ENCODE measurements at regions of chr20 and their contacts with region 1.

Region 1: GRCh38 chr20:34704177-34705007 is at the start of gene TP53INP2:
- DNase-seq: peak; percentile 94 to 96
- ATAC-seq: peak; percentile 79 to 88 (median 86)
- H3K4me3 ChIP-seq: peak within 1 kb of the TSS; percentile 58 to 91 (median 79)
- H3K27ac ChIP-seq: peak within 1 kb of the TSS; percentile 98 to 100 (median 100)
- H3K4me1 ChIP-seq: peaks cover 5 to 53% (median 43%) of the 10 kb centered on the region in 9 donors
- H3K27me3 ChIP-seq: no peaks in the 10 kb centered on the region
- CTCF ChIP-seq: no peak
- total RNA-seq, gene TP53INP2: 73.4 to 174 (median 136) TPM

Region 2: GRCh38 chr20:34538671-34539123 is 165.7 kb before region 1 on chr20:
- intact Hi-C with region 1: loop called in 9 of 10 experiments (anchors 5 to 10 kb)
- DNase-seq: peak in 1 of 2 donors; percentile 49
- ATAC-seq: peak in 7 of 8 donors; percentile 14 to 68 (median 51)
- H3K4me3 ChIP-seq: no peak overlapping the region
- H3K27ac ChIP-seq: peak overlapping the region in 1 of 10 donors; percentile 10
- H3K4me1 ChIP-seq: peaks cover 0 to 26% (median 10%) of the 10 kb centered on the region in 9 donors
- H3K27me3 ChIP-seq: no peaks in the 10 kb centered on the region
- CTCF ChIP-seq: peak; percentile 47 to 84 (median 79)

Region 3: GRCh38 chr20:34558320-34559218 is 145.8 kb before region 1 on chr20 and contains the start of gene MAP1LC3A:
- intact Hi-C with region 1: loop called in 1 of 10 experiments (anchors 5 kb)
- DNase-seq: peak; percentile 95 to 97
- ATAC-seq: peak; percentile 91 to 97 (median 96)
- H3K4me3 ChIP-seq: peak within 1 kb of the TSS; percentile 63 to 93 (median 74)
- H3K27ac ChIP-seq: peak within 1 kb of the TSS; percentile 71 to 98 (median 94)
- H3K4me1 ChIP-seq: peaks cover 0 to 32% (median 15%) of the 10 kb centered on the region in 9 donors
- H3K27me3 ChIP-seq: no peaks in the 10 kb centered on the region
- CTCF ChIP-seq: no peak
- total RNA-seq, gene MAP1LC3A: 61.7 to 137 (median 74.6) TPM

Region 4: GRCh38 chr20:34615477-34615876 is 88.9 kb before region 1 on chr20:
- intact Hi-C with region 1: no loop called
- DNase-seq: no peak
- ATAC-seq: no peak
- H3K4me3 ChIP-seq: no peak overlapping the region
- H3K27ac ChIP-seq: no peak overlapping the region
- H3K4me1 ChIP-seq: peaks cover 0 to 5% (median 0%) of the 10 kb centered on the region in 9 donors
- H3K27me3 ChIP-seq: no peaks in the 10 kb centered on the region
- CTCF ChIP-seq: no peak

Region 5: DNA sequence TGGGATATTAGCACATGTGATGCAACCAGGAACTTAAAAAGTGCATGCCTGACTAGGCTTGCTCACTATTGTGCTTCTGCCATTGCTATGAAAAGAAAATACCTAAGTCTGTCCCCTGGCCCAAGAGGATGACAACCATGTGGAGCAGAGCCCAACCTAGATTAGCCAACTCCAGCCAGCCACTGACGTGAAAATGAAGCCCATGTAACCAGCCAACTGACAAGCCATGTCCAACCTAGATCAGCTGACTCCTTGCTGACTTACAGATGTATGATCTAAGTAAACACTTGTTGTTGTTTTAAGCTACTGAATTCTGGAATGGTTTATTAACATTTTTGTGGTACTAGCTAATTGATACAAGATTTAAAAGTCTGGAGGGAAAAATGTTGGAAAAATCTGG is 75.0 kb before region 1 on chr20:
- intact Hi-C with region 1: loop called in 1 of 10 experiments (anchors 2 kb)
- DNase-seq: peak; percentile 25 to 50
- ATAC-seq: peak; percentile 66 to 93 (median 82)
- H3K4me3 ChIP-seq: no peak overlapping the region
- H3K27ac ChIP-seq: peak overlapping the region; percentile 4 to 75 (median 70)
- H3K4me1 ChIP-seq: peaks cover 0 to 22% (median 7%) of the 10 kb centered on the region in 9 donors
- H3K27me3 ChIP-seq: no peaks in the 10 kb centered on the region
- CTCF ChIP-seq: no peak